ENCODE measurements at regions of chr1 and their contacts with region 1.

Region 1: GRCh38 chr1:163509114-163509513 is 187.4 kb downstream of the NUF2 start:
- DNase-seq: no peak
- H3K4me3 ChIP-seq: no peak overlapping the region
- H3K27ac ChIP-seq: no peak overlapping the region
- H3K4me1 ChIP-seq: peaks cover 0 to 12% (median 8%) of the 10 kb centered on the region in 4 experiments; a peak in 3 of 7 replicates
- H3K27me3 ChIP-seq: no peaks in the 10 kb centered on the region
- CTCF ChIP-seq: no peak
- EP300 ChIP-seq: no peak
- POLR2A ChIP-seq: no peak
- RAD21 ChIP-seq: no peak

Region 2: GRCh38 chr1:163406772-163407171 is 102.3 kb before region 1 on chr1:
- CTCF ChIA-PET with region 1: no interaction called
- POLR2A ChIA-PET with region 1: no interaction called
- DNase-seq: no peak
- H3K4me3 ChIP-seq: no peak overlapping the region
- H3K27ac ChIP-seq: no peak overlapping the region
- H3K4me1 ChIP-seq: peaks cover 2 to 11% (median 7%) of the 10 kb centered on the region in 4 experiments; a peak in 5 of 7 replicates
- H3K27me3 ChIP-seq: no peaks in the 10 kb centered on the region
- CTCF ChIP-seq: no peak
- EP300 ChIP-seq: no peak
- POLR2A ChIP-seq: no peak
- RAD21 ChIP-seq: no peak

Region 3: GRCh38 chr1:163528710-163529348 is 19.7 kb after region 1 on chr1:
- CTCF ChIA-PET with region 1: interaction called, 15 read pairs
- POLR2A ChIA-PET with region 1: no interaction called
- DNase-seq: no peak
- H3K4me3 ChIP-seq: no peak overlapping the region
- H3K27ac ChIP-seq: no peak overlapping the region
- H3K4me1 ChIP-seq: no peaks in the 10 kb centered on the region
- H3K27me3 ChIP-seq: 0 out of 7 replicates have a peak, but pooled peaks cover 0 to 2% (median 0%) of the 10 kb centered on the region in 4 experiments
- CTCF ChIP-seq: peak in 2 of 3 experiments; percentile 26 to 38; a peak in 2 of 4 replicates
- EP300 ChIP-seq: no peak
- POLR2A ChIP-seq: no peak
- RAD21 ChIP-seq: peak; percentile 59 to 60